Naive thymus-derived CD4-positive, alpha-beta T cell (primary cell): ENCODE measurements at regions of chr15 and their contacts with region 1.

Region 1: DNA sequence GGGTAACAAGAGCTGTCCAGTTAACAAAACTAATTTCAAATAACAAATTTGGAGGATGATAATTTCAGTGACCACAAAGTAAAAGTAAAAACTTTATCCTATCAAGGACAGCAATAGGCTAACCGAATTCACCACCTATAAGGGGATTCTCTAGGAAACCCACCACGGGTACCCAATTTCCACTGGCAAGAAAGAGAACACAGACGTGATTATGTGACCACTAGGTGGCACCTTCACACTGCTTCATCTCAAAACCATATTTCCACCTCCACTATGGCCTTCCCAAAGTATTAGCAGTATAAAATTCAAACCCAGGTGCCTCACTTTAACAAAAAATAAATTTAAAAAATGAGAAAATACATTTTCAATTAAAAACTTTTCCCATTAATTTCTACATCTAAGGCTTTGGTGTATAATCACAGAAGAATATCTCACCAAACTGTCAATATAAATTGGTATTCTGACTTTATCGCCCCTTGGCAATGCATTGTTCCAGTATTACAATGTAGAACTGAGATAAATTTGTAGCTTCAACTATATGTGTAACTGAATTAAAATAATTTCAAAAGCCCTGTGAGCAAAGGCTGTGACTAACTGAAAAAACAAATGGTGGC is 96.5 kb downstream of the FSIP1 start:
- DNase-seq: peak in 6 of 9 donors; percentile 10 to 43 (median 33)
- ATAC-seq: peak; percentile 51
- H3K4me3 ChIP-seq: no peak overlapping the region
- H3K4me3 Mint-ChIP-seq: no peak overlapping the region
- H3K27ac ChIP-seq: no peak overlapping the region
- H3K27ac Mint-ChIP-seq: no peak overlapping the region
- H3K4me1 ChIP-seq: no peaks in the 10 kb centered on the region
- H3K4me1 Mint-ChIP-seq: peaks cover 0 to 5% (median 0%) of the 10 kb centered on the region in 7 donors
- H3K27me3 ChIP-seq: no peaks in the 10 kb centered on the region
- H3K27me3 Mint-ChIP-seq: peaks cover 0 to 15% (median 0%) of the 10 kb centered on the region in 5 donors

Region 2: DNA sequence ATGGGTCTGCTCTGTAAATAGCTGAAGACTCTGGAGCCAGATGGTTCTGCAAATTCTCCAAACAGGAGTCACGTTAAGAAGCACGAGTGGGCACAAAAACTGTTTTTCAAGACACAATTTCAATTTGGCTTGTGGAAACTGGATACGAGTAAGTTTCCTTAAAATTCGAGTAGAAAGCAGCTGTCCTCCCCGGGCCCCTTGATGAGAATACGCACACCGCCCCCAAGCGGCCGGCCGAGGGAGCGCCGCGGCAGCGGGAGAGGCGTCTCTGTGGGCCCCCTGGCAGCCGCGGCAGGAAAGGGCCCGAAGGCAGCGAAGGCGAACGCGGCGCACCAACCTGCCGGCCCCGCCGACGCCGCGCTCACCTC is 106.0 kb before region 1 on chr15:
- CTCF ChIA-PET with region 1: no interaction called
- POLR2A ChIA-PET with region 1: no interaction called
- intact Hi-C with region 1: loop called in 1 of 2 experiments (anchors 5 kb)
- DNase-seq: peak; percentile 23 to 91 (median 63)
- ATAC-seq: peak; percentile 92
- H3K4me3 ChIP-seq: peak overlapping the region; percentile 26
- H3K4me3 Mint-ChIP-seq: peak overlapping the region in 7 of 10 donors; percentile 16 to 82 (median 64)
- H3K27ac ChIP-seq: no peak overlapping the region
- H3K27ac Mint-ChIP-seq: no peak overlapping the region
- H3K4me1 ChIP-seq: peaks cover 0 to 11% of the 10 kb centered on the region in 2 donors
- H3K4me1 Mint-ChIP-seq: peaks cover 0 to 31% (median 14%) of the 10 kb centered on the region in 7 donors
- H3K27me3 ChIP-seq: peaks cover 0 to 5% of the 10 kb centered on the region in 2 donors
- H3K27me3 Mint-ChIP-seq: peaks cover 53 to 74% (median 66%) of the 10 kb centered on the region in 5 donors

Region 3: GRCh38 chr15:39756806-39757522 is 70.9 kb after region 1 on chr15:
- CTCF ChIA-PET with region 1: interaction called, 10 read pairs
- POLR2A ChIA-PET with region 1: no interaction called
- intact Hi-C with region 1: loop called (anchors 1 kb)
- DNase-seq: peak in 6 of 9 donors; percentile 29 to 50 (median 40)
- ATAC-seq: no peak
- H3K4me3 ChIP-seq: no peak overlapping the region
- H3K4me3 Mint-ChIP-seq: no peak overlapping the region
- H3K27ac ChIP-seq: no peak overlapping the region
- H3K27ac Mint-ChIP-seq: no peak overlapping the region
- H3K4me1 ChIP-seq: no peaks in the 10 kb centered on the region
- H3K4me1 Mint-ChIP-seq: no peaks in the 10 kb centered on the region
- H3K27me3 ChIP-seq: no peaks in the 10 kb centered on the region
- H3K27me3 Mint-ChIP-seq: peaks cover 0 to 58% (median 5%) of the 10 kb centered on the region in 5 donors

Region 4: GRCh38 chr15:39976291-39977274 is 290.5 kb after region 1 on chr15:
- CTCF ChIA-PET with region 1: no interaction called
- POLR2A ChIA-PET with region 1: no interaction called
- intact Hi-C with region 1: loop called in 1 of 2 experiments (anchors 1 kb)
- DNase-seq: no peak
- ATAC-seq: no peak
- H3K4me3 ChIP-seq: no peak overlapping the region
- H3K4me3 Mint-ChIP-seq: peak overlapping the region in 4 of 10 donors; percentile 19 to 61 (median 42)
- H3K27ac ChIP-seq: no peak overlapping the region
- H3K27ac Mint-ChIP-seq: peak overlapping the region in 1 of 9 donors; percentile 56
- H3K4me1 ChIP-seq: no peaks in the 10 kb centered on the region
- H3K4me1 Mint-ChIP-seq: no peaks in the 10 kb centered on the region
- H3K27me3 ChIP-seq: no peaks in the 10 kb centered on the region
- H3K27me3 Mint-ChIP-seq: no peaks in the 10 kb centered on the region

Region 5: GRCh38 chr15:40274350-40275274 is 588.5 kb after region 1 on chr15:
- CTCF ChIA-PET with region 1: no interaction called
- POLR2A ChIA-PET with region 1: no interaction called
- intact Hi-C with region 1: loop called in 1 of 2 experiments (anchors 5 kb)
- DNase-seq: peak; percentile 71 to 95 (median 88)
- ATAC-seq: peak; percentile 94
- H3K4me3 ChIP-seq: no peak overlapping the region
- H3K4me3 Mint-ChIP-seq: peak overlapping the region in 1 of 10 donors; percentile 45
- H3K27ac ChIP-seq: no peak overlapping the region
- H3K27ac Mint-ChIP-seq: peak overlapping the region in 6 of 9 donors; percentile 17 to 70 (median 50)
- H3K4me1 ChIP-seq: peaks cover 0 to 3% of the 10 kb centered on the region in 2 donors
- H3K4me1 Mint-ChIP-seq: peaks cover 0 to 17% (median 5%) of the 10 kb centered on the region in 7 donors
- H3K27me3 ChIP-seq: no peaks in the 10 kb centered on the region
- H3K27me3 Mint-ChIP-seq: peaks cover 12 to 29% (median 16%) of the 10 kb centered on the region in 5 donors